ENCODE measurements at regions of chr7 and their contacts with region 1.

Region 1: GRCh38 chr7:129218514-129219062 is 6.2 kb upstream of the AHCYL2 start:
- DNase-seq: peak; percentile 64
- H3K27ac ChIP-seq: no peak overlapping the region
- CTCF ChIP-seq: peak; percentile 91

Region 2: DNA sequence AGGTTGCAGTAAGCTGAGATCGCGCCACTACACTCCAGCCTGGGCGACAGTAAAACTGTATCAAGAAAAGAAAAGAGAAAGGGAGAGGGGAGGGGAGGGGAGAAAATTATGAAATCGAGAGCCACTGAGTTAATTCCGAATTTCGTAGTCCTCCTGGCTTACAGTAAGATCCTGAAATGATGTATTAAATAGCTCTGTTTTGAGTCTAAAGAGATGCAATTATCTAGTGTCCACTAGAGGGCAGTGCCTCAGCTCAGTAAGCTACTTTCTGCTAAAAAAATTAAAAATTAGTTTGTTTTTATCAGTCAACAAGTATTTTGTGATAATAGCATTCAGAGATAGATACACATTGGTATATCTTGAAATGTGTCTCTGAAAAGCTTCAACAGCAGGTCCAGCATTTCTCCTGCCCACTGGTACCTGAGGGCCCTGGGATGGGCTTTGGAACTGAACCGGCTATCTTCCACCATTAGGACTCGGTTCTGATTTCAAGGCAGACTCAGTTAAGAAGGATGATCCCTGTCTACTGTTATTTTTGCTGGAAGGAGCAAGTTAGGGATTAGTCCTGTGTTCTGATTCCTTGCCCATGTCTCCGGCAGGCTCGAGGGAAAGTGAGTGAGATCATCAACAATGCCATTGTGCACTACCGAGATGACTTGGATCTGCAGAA is 54.6 kb before region 1 on chr7:
- CTCF ChIA-PET with region 1: interaction called, 11 read pairs
- POLR2A ChIA-PET with region 1: no interaction called
- DNase-seq: peak; percentile 26
- H3K27ac ChIP-seq: no peak overlapping the region
- CTCF ChIP-seq: peak; percentile 94

Region 3: GRCh38 chr7:129298268-129298893 is 79.8 kb after region 1 on chr7:
- CTCF ChIA-PET with region 1: interaction called, 17 read pairs
- POLR2A ChIA-PET with region 1: no interaction called
- DNase-seq: peak; percentile 43
- H3K27ac ChIP-seq: no peak overlapping the region
- CTCF ChIP-seq: peak; percentile 92

Region 4: DNA sequence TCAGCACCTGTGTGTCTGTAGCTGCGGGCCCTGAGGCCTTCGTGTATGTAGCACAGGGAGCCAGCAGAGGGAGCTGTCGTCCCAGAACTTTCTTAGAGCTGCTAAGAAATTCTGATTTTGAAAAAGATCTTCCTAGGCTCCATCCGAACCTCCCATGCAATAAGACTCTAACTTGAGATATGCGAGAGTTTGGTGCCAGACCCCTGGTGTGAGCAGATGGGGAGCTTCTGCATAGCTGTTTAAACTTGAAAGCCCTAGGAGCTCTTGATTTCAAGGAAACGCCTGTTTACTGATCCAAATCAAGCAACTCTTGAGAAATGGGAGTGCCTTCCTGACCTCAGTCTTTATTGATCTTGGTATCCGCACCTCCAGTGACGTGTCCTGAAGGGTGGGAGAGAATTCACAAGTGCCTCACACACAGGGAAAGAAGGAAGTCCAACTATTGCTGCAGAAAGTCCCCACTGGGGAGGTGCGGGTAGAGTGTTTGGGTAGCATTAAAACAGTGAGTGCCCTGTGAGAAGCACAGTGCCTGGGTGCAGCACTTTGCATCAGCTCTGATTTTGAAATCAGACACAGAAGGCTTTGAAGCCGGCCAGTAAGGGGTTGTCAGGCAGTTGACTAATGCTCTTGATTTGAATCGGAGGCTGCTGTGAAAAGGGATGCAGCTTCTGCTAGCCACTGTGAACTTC is 149.3 kb after region 1 on chr7:
- CTCF ChIA-PET with region 1: interaction called, 10 read pairs
- POLR2A ChIA-PET with region 1: no interaction called
- DNase-seq: peak; percentile 59
- H3K27ac ChIP-seq: no peak overlapping the region
- CTCF ChIP-seq: peak; percentile 95

Measured in RWPE1 (cell line).